PC-3 (cell line): ENCODE measurements at regions of chr9 and their contacts with region 1.

Region 1: GRCh38 chr9:112061152-112061740 is 113.9 kb downstream of the SUSD1 start:
- DNase-seq: peak; percentile 90
- ATAC-seq: peak; percentile 60
- H3K4me3 ChIP-seq: no peak overlapping the region
- H3K27ac ChIP-seq: peak overlapping the region; percentile 84
- H3K4me1 ChIP-seq: peaks cover 36% of the 10 kb centered on the region
- H3K27me3 ChIP-seq: no peaks in the 10 kb centered on the region
- CTCF ChIP-seq: no peak

Region 2: GRCh38 chr9:111805830-111806241 is 255.4 kb before region 1 on chr9:
- CTCF ChIA-PET with region 1: no interaction called
- POLR2A ChIA-PET with region 1: no interaction called
- intact Hi-C with region 1: no loop called
- DNase-seq: peak; percentile 88
- ATAC-seq: peak; percentile 96
- H3K4me3 ChIP-seq: peak overlapping the region; percentile 25; the same call in 1 of the 2 replicates
- H3K27ac ChIP-seq: peak overlapping the region; percentile 99
- H3K4me1 ChIP-seq: peaks cover 27% of the 10 kb centered on the region
- H3K27me3 ChIP-seq: no peaks in the 10 kb centered on the region
- CTCF ChIP-seq: no peak

Region 3: GRCh38 chr9:111926421-111926875 is 134.8 kb before region 1 on chr9:
- CTCF ChIA-PET with region 1: no interaction called
- POLR2A ChIA-PET with region 1: no interaction called
- intact Hi-C with region 1: no loop called
- DNase-seq: no peak
- ATAC-seq: no peak
- H3K4me3 ChIP-seq: no peak overlapping the region
- H3K27ac ChIP-seq: no peak overlapping the region
- H3K4me1 ChIP-seq: no peaks in the 10 kb centered on the region
- H3K27me3 ChIP-seq: no peaks in the 10 kb centered on the region
- CTCF ChIP-seq: no peak

Region 4: GRCh38 chr9:112010222-112010936 is 50.9 kb before region 1 on chr9:
- CTCF ChIA-PET with region 1: no interaction called
- POLR2A ChIA-PET with region 1: no interaction called
- intact Hi-C with region 1: no loop called
- DNase-seq: no peak
- ATAC-seq: no peak
- H3K4me3 ChIP-seq: no peak overlapping the region
- H3K27ac ChIP-seq: peak overlapping the region; percentile 95; the same call in 1 of the 2 replicates
- H3K4me1 ChIP-seq: peaks cover 33% of the 10 kb centered on the region
- H3K27me3 ChIP-seq: no peaks in the 10 kb centered on the region
- CTCF ChIP-seq: no peak

Region 5: DNA sequence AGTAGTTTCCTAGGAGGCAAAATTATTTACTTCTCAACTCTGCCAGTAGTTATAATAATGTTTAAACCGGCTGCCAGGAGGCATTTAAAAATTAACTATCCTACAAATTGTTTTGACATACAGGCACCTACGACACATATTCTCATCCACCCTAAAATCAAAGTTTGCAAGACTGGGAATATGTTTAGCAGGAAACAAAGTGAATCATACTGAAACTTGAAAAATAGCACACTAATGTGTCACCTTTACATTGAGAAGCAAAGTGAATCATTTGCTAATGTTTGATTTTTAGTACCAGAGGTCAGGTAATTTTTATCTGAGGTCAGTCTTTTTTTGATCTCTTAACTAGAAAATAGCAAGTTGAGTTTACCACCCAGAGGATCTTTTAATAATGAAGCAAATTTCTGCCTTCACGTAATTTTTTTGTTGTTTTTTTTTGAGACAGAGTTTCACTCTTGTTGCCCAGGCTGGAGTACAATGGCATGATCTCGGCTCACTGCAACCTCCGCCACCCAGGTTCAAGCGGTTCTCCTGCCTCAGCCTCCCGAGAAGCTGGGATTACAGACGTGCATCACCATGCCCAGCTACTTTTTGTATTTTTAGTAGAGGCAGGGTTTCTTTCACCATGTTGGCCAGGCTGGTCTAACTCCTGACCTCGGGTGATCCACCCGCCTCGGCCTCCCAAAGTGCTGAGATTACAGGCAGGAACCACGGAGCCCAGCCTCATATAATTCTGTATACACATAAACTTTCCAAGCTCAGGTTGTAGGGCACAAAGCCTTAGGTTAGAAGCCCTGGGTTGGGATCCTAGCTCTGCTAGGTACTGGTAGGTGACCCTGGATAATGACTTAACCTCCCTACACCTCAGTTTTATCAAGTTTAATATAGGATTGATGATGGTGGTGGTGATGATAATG is 40.3 kb before region 1 on chr9:
- CTCF ChIA-PET with region 1: no interaction called
- POLR2A ChIA-PET with region 1: no interaction called
- intact Hi-C with region 1: loop called (anchors 5 kb)
- DNase-seq: peak; percentile 89
- ATAC-seq: peak; percentile 90
- H3K4me3 ChIP-seq: no peak overlapping the region
- H3K27ac ChIP-seq: peak overlapping the region; percentile 95
- H3K4me1 ChIP-seq: peaks cover 23% of the 10 kb centered on the region
- H3K27me3 ChIP-seq: no peaks in the 10 kb centered on the region
- CTCF ChIP-seq: no peak

Region 6: GRCh38 chr9:112046181-112046580 is 15.1 kb before region 1 on chr9:
- CTCF ChIA-PET with region 1: no interaction called
- POLR2A ChIA-PET with region 1: no interaction called
- intact Hi-C with region 1: loop called (anchors 2 kb)
- DNase-seq: peak; percentile 86
- ATAC-seq: peak; percentile 50
- H3K4me3 ChIP-seq: no peak overlapping the region
- H3K27ac ChIP-seq: peak overlapping the region; percentile 82
- H3K4me1 ChIP-seq: peaks cover 52% of the 10 kb centered on the region
- H3K27me3 ChIP-seq: no peaks in the 10 kb centered on the region
- CTCF ChIP-seq: no peak

Region 7: DNA sequence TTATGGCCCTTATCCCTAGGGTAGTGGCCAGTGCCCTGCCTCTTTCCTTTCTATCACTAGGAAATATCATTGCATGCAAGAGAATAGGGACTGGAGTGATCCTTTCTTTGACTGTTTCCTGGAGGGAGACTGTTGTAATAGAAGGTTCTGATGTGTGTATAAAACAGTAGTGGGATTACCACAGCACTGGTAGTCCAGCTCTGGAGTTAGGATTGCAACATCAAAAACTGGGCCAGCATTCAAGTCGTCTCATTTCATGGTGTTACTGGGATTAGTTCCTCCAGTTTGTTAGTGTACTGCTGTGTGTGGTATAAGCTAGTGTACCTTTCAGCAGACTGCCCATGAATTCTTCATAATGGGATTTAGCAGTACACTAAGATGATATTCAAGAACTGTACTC is 471.2 kb after region 1 on chr9:
- CTCF ChIA-PET with region 1: no interaction called
- POLR2A ChIA-PET with region 1: no interaction called
- intact Hi-C with region 1: no loop called
- DNase-seq: no peak
- ATAC-seq: no peak
- H3K4me3 ChIP-seq: no peak overlapping the region
- H3K27ac ChIP-seq: no peak overlapping the region
- H3K4me1 ChIP-seq: no peaks in the 10 kb centered on the region
- H3K27me3 ChIP-seq: no peaks in the 10 kb centered on the region
- CTCF ChIP-seq: no peak